ENCODE measurements at regions of chr9 and their contacts with region 1.

Region 1: DNA sequence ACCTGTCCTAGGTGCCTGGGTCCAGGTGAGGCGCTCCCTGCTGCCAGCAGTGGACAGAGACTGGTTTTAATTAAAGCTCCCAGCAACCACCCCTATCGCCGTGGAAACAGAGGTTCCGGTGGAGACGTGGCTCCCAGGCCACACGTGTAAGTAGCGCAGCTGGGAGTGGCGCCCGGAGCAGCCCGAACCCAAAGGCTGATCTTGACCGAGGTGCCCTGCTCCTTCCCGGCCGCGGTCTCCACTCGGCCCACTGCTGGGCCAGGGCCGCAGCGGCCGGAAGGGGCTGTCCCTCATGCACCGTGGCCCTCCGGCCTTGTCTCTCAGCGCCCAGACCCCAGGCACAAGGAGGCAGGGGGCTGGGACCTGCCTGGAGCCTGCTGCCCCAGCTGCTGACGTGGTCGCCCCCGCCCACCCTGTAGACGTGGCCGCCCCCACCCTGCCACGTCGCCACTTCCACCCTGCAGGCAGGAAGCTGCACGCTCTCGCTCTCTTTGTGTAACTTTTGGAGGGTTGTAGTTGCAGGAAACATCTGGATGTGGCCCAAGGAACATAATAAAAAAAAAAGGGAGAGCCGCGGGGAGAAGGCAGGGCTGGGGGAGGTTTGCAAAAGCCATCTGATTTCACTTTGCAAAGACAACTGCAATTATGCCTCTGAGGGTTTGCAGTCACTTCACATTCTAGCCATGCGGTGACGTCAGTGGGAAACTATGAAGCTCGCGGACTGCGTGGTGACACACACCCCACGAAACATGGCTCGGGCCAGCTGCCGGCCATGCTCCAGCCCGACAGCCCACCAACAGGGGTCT is 129.9 kb downstream of the RXRA start:
- DNase-seq: peak; percentile 90 to 92 (median 91)
- ATAC-seq: peak; percentile 56 to 92 (median 83)
- H3K4me3 ChIP-seq: peak overlapping the region in 10 of 12 donors; percentile 18 to 57 (median 42)
- H3K27ac ChIP-seq: peak overlapping the region; percentile 82 to 96 (median 90)
- H3K4me1 ChIP-seq: peaks cover 3 to 38% (median 21%) of the 10 kb centered on the region in 12 donors
- H3K27me3 ChIP-seq: no peaks in the 10 kb centered on the region
- CTCF ChIP-seq: peak in 2 of 12 donors; percentile 3 to 14
- POLR2A ChIP-seq: no peak

Region 2: DNA sequence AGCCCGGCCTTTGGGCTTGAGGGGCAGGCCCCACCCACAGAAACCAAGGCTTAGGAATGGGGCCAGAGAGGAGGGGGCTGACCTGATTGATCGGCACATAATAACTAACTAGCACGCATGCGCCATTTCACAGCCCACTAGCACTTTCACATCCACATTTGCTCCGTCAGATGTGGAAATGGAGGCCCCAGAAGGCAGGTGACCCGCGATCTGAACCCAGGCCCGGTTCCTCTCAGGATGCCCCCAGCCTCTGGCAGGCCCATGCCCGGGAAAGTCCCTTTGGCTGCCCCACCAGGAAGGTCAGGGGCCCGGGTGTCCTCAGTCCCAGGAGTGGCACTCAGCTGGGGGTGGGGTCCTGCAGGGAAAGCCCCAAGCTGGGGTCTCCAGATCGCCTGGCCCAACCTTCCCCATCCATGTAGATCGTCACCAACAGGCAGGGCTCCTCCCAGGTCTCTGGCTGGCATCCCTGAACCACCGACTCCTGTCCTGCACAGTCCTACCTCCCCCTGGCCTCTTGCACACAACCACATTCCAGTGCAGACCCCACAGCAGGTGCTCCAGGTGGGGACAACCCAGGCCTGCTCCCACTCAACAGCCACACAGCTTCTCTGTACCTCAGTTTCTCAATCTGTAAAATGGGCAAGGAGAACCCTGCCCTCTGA is 510.7 kb before region 1 on chr9:
- intact Hi-C with region 1: no loop called
- DNase-seq: peak in 3 of 5 donors; percentile 19 to 43 (median 20)
- ATAC-seq: no peak
- H3K4me3 ChIP-seq: no peak overlapping the region
- H3K27ac ChIP-seq: no peak overlapping the region
- H3K4me1 ChIP-seq: peaks cover 0 to 19% (median 0%) of the 10 kb centered on the region in 12 donors
- H3K27me3 ChIP-seq: no peaks in the 10 kb centered on the region
- CTCF ChIP-seq: no peak
- POLR2A ChIP-seq: no peak

Region 3: DNA sequence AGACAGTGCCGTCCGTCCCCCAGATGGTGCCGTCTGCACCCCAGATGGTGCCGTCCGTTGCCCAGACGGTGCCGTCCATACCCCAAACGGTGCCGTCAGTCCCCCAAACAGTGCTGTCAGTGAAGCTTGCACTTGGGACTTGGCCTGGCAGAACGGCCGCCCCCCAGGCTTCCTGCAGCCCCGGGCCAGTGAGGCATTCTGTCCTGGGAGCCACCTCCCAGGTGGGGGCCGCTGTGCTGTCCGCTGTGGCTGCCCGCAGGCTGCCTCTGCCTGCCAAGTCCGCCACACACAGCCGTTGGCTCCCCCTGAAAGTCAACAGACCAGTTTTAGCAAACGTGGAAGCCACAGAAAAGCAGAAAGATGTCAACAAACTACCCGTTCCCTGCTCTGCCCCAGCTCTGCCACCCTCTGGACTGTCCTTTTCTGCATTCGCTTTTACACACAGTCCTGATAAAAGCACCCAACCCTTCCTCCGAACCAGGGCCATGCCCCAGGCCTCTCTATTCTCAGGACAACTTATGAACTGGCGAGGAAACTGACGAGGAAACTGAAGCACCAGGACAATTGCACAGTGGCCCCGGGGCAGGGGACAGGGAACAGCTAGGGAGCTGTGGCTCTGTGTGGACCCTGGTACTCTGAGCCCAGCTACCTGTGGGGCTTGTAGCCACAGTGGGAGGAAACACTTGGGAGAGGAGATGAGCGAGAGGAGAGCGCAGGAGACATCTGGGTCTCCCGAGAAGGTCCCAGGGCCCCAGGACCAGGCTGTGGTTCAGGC is 169.5 kb before region 1 on chr9:
- intact Hi-C with region 1: no loop called
- DNase-seq: peak in 1 of 5 donors; percentile 14
- ATAC-seq: no peak
- H3K4me3 ChIP-seq: no peak overlapping the region
- H3K27ac ChIP-seq: no peak overlapping the region
- H3K4me1 ChIP-seq: peaks cover 0 to 31% (median 13%) of the 10 kb centered on the region in 12 donors
- H3K27me3 ChIP-seq: peaks cover 0 to 3% (median 0%) of the 10 kb centered on the region in 9 donors
- CTCF ChIP-seq: no peak
- POLR2A ChIP-seq: no peak

Region 4: GRCh38 chr9:134592018-134592818 is 136.1 kb after region 1 on chr9:
- intact Hi-C with region 1: loop called in 1 of 10 experiments (anchors 10 kb)
- DNase-seq: peak in 3 of 5 donors; percentile 37 to 68 (median 66)
- ATAC-seq: peak; percentile 15 to 88 (median 82)
- H3K4me3 ChIP-seq: no peak overlapping the region
- H3K27ac ChIP-seq: peak overlapping the region in 11 of 12 donors; percentile 4 to 83 (median 51)
- H3K4me1 ChIP-seq: peaks cover 0 to 20% (median 0%) of the 10 kb centered on the region in 12 donors
- H3K27me3 ChIP-seq: peaks cover 0 to 6% (median 0%) of the 10 kb centered on the region in 9 donors
- CTCF ChIP-seq: no peak
- POLR2A ChIP-seq: no peak

Region 5: DNA sequence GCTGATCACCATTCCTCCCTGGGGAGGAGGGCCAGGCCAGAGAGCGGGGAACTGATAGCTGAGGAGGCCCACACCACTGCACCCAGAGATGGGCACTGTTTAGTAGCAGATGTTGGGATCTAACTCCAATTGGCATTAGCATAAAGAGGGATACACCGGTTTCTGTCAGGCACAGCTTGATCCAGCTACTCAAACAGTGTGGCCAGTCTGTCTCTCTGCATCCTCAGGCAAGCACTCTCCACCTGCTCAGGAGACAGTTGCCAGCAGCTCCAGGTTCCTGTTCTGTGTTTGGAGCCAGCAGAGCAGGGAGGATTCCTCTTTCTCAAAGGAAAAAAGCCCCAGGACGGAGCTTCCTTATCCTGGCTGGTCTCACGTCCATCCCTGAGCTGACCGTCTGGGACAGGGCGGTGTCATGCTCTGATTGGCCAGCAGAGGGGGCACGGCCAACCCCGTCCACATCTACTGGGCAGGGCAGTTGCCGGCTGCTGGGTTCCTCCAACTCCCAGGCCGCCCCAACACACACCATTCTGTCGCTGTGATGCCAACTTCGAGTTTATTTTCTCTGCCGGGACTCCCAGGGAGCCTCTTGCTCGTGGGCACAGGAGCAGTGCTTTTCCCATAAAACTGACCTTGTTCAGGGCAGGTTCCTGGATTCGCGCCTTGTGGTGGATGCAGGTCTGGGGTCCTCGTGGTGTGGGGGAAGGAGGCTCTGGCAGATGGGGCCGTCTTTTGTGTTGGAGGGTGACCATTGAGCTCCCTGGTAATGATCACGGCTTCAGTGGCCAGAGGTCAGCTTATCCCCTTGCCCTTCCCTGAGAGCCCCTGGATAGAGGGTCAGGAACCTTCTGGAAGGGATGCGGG is 233.4 kb after region 1 on chr9:
- intact Hi-C with region 1: loop called in 2 of 10 experiments (anchors 5 kb)
- DNase-seq: peak; percentile 66 to 86 (median 70)
- ATAC-seq: peak; percentile 79 to 84 (median 82)
- H3K4me3 ChIP-seq: no peak overlapping the region
- H3K27ac ChIP-seq: peak overlapping the region in 2 of 12 donors; percentile 17 to 53
- H3K4me1 ChIP-seq: peaks cover 0 to 38% (median 8%) of the 10 kb centered on the region in 12 donors
- H3K27me3 ChIP-seq: no peaks in the 10 kb centered on the region
- CTCF ChIP-seq: peak; percentile 63 to 89 (median 80)
- POLR2A ChIP-seq: no peak

Region 6: DNA sequence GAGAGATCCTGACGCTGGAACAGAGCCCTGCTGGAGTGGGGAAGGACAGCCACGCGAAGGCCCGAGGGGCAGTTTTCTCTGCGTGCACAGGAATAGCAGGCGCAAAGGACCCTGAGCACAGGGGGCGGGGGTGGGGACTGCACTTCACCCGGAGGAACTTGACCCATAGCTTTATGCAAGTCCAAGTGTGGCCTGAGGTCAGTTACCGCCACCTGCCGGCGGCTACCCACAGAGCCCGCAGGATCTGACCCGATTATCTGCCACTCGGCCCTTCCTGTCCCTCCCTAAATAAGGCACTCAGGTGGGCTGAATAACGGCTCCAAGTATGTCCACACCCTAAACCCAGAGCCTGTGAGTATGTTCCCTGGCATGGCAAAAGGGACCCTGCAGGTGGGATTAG is 526.9 kb after region 1 on chr9:
- intact Hi-C with region 1: loop called in 1 of 10 experiments (anchors 10 kb)
- DNase-seq: peak in 3 of 5 donors; percentile 37 to 78 (median 53)
- ATAC-seq: peak; percentile 31 to 49 (median 40)
- H3K4me3 ChIP-seq: no peak overlapping the region
- H3K27ac ChIP-seq: no peak overlapping the region
- H3K4me1 ChIP-seq: no peaks in the 10 kb centered on the region
- H3K27me3 ChIP-seq: peaks cover 0 to 5% (median 0%) of the 10 kb centered on the region in 9 donors
- CTCF ChIP-seq: peak; percentile 33 to 63 (median 52)
- POLR2A ChIP-seq: no peak

Measured in heart left ventricle (tissue), 16 donors.